ENCODE measurements at regions of chr11 and their contacts with region 1.

Region 1: DNA sequence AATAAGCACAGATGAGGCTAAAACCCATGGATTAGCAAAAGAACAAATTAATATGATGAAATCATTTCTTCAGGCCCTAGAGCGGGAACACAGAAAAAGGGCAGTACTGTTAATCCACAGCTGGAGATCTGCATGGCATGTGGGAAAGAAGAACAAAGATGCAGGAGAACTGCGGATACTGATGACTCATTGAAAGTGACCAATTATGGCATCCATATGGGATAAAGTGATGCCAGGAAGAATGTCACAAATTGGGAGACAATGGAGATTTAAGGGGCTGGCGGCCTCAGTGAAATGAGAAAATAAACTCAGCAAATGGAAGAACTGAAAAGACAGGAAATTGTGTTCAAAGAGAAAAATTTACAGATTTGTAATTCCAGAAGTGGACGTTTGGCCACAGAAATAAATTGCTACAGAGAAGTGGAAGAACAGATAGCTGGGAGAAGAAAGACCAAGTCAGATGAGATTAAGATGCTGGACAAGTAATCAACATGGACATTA is 39.4 kb downstream of the SIK3 start:
- DNase-seq: no peak
- H3K4me3 Mint-ChIP-seq: no peak overlapping the region
- H3K27ac Mint-ChIP-seq: no peak overlapping the region
- H3K4me1 Mint-ChIP-seq: peaks cover 36% of the 10 kb centered on the region
- H3K27me3 Mint-ChIP-seq: no peaks in the 10 kb centered on the region

Region 2: DNA sequence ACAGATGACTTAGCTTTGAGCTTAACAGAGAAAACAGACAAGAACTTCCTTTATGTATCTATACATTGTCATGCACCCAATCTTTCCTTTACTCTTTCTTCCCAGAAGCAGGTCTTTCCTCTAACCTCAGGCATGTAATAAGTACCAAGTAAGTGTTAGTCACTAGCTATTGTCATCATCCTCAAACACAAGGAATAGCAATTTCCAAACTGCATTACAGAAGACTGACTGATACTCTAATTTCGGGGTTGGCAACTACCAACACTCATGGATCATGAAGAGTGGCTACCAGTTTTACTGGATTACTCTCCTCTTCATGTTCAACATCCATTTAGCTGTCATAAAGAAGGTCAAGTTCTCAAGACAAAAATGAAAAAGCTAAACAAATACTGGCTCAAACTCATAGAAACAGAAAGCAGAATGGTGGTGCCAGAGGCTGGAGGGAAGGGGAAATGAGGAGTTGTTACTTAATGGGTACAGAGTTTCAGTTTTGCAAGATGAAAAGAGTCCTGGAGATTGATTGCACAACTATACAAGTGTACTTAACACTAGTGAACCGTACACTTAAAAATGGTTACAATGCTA is 72.2 kb before region 1 on chr11:
- intact Hi-C with region 1: loop called (anchors 1 kb)
- DNase-seq: no peak
- H3K4me3 Mint-ChIP-seq: peak overlapping the region; percentile 49
- H3K27ac Mint-ChIP-seq: peak overlapping the region; percentile 80
- H3K4me1 Mint-ChIP-seq: peaks cover 56% of the 10 kb centered on the region
- H3K27me3 Mint-ChIP-seq: no peaks in the 10 kb centered on the region

Region 3: GRCh38 chr11:117002639-117003299 is 56.0 kb before region 1 on chr11:
- intact Hi-C with region 1: loop called (anchors 1 kb)
- DNase-seq: peak; percentile 47
- H3K4me3 Mint-ChIP-seq: no peak overlapping the region
- H3K27ac Mint-ChIP-seq: peak overlapping the region; percentile 91
- H3K4me1 Mint-ChIP-seq: peaks cover 59% of the 10 kb centered on the region
- H3K27me3 Mint-ChIP-seq: no peaks in the 10 kb centered on the region

Region 4: DNA sequence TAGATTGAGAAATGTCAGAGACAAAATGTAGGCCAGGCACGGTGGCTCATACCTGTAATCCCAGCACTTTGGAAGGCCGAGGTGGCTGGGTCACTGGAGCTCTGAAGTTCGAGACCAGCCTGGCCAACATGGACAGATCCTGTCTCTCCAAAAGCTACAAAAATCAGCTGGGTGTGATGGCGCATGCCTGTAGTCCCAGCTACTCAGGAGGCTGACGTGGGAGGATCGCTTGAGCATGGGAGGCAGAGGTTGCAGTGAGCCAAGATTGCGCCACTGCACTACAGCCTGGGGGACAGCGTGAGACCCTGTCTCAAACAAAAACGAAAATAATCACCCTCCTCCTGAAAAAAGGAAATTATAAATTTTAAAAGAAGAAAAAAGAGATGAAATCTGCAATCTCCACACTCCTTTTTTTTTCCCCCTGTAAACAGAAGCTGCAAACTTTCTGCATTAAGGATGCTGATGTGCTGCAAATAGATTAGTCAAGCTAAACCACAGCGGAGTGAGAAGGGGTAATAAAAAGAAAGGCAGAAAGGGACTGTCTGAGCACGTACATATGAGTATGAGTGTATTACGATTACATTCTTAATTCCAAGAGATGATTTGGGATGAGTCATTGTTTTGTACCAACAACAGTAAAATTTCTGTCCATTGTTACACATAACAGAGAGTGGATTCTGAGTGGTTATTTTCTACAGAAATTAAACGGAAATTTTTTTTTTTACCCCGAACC is 47.8 kb before region 1 on chr11:
- intact Hi-C with region 1: loop called (anchors 1 kb)
- DNase-seq: no peak
- H3K4me3 Mint-ChIP-seq: no peak overlapping the region
- H3K27ac Mint-ChIP-seq: peak overlapping the region; percentile 74
- H3K4me1 Mint-ChIP-seq: peaks cover 35% of the 10 kb centered on the region
- H3K27me3 Mint-ChIP-seq: no peaks in the 10 kb centered on the region

Region 5: DNA sequence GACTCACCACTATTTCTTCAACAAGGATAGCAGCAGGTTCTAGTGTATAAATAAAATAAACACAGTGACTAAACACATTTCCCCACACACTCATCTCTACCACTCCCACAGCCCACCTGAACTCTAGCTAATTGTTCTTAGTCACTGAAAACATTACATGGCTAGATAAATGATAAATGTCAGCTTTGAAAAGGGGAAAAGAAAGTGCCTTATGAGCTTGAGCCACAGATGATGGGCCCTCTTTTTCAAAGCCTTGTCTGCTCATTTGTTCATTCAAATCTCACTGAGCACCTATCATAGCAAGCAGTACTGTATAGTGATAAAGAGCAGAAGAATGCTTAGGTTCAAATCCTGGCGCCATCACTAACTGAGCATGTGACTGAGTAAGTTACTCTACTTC is 18.9 kb before region 1 on chr11:
- intact Hi-C with region 1: loop called (anchors 1 kb)
- DNase-seq: no peak
- H3K4me3 Mint-ChIP-seq: no peak overlapping the region
- H3K27ac Mint-ChIP-seq: no peak overlapping the region
- H3K4me1 Mint-ChIP-seq: peaks cover 60% of the 10 kb centered on the region
- H3K27me3 Mint-ChIP-seq: no peaks in the 10 kb centered on the region

Region 6: GRCh38 chr11:117072517-117073461 is 14.0 kb after region 1 on chr11:
- intact Hi-C with region 1: loop called (anchors 1 kb)
- DNase-seq: no peak
- H3K4me3 Mint-ChIP-seq: no peak overlapping the region
- H3K27ac Mint-ChIP-seq: no peak overlapping the region
- H3K4me1 Mint-ChIP-seq: peaks cover 41% of the 10 kb centered on the region
- H3K27me3 Mint-ChIP-seq: no peaks in the 10 kb centered on the region

Region 7: GRCh38 chr11:117092951-117093590 is 34.3 kb after region 1 on chr11:
- intact Hi-C with region 1: loop called (anchors 1 kb)
- DNase-seq: no peak
- H3K4me3 Mint-ChIP-seq: no peak overlapping the region
- H3K27ac Mint-ChIP-seq: peak overlapping the region; percentile 67
- H3K4me1 Mint-ChIP-seq: peaks cover 70% of the 10 kb centered on the region
- H3K27me3 Mint-ChIP-seq: no peaks in the 10 kb centered on the region